Lower leg skin (tissue), 4 donors: ENCODE measurements at regions of chr15 and their contacts with region 1.

Region 1: DNA sequence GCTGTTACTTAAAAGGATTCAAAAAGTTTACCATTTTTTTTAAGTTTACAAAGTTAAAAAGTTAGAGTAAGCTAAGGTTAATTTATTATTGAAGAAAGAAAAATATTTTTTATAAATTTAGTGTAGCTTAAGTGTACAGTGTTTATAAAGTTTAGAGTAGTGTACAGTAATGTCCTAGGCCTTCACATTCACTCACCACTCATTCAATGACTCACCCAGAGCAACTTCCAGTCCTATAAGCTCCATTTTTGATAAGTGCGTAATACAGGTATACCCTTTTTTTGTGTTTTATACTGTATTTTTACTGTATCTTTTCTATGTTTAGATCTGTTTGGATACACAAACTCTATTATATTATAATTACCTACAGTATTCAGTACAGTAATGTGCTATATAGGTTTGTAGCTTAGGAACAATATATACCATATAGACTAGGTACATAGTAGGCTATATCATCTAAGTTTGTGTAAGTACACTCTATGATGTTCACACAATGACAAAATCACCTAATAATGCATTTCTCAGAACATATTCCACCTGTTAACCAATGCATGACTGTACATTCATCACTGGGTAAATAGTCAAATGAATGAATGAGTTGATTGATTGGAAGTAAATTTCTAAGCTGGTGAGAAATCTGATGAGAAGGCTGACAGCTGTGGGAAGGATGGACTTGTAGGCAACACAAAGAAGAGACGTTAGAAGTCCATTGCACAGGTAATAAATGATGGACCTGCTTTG is 95.2 kb upstream of the CDIN1 start:
- DNase-seq: no peak
- H3K4me3 ChIP-seq: no peak overlapping the region
- CTCF ChIP-seq: no peak
- POLR2A ChIP-seq: no peak

Region 2: DNA sequence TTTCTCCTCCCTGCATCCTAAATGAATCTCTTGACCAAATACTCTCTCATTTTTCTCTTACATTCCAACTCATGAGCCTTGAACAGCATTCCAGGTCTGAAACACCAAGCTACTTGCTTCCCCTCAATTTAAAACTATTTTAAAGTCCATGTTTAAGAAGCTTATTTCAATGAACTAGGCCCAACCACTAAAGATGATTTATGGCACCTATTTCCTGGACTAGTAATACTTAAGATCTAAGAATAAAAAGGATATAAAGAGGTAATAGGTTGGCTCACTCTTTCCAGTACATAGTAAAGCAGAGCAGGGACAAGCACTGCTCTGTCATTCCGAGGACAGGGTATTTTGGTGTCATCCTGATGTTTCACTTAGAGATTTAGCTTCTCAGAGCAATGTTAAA is 1230.9 kb after region 1 on chr15:
- intact Hi-C with region 1: loop called (anchors 5 kb)
- DNase-seq: no peak
- H3K4me3 ChIP-seq: no peak overlapping the region
- CTCF ChIP-seq: no peak
- POLR2A ChIP-seq: no peak